ENCODE measurements at regions of chr17 and their contacts with region 1.

Region 1: DNA sequence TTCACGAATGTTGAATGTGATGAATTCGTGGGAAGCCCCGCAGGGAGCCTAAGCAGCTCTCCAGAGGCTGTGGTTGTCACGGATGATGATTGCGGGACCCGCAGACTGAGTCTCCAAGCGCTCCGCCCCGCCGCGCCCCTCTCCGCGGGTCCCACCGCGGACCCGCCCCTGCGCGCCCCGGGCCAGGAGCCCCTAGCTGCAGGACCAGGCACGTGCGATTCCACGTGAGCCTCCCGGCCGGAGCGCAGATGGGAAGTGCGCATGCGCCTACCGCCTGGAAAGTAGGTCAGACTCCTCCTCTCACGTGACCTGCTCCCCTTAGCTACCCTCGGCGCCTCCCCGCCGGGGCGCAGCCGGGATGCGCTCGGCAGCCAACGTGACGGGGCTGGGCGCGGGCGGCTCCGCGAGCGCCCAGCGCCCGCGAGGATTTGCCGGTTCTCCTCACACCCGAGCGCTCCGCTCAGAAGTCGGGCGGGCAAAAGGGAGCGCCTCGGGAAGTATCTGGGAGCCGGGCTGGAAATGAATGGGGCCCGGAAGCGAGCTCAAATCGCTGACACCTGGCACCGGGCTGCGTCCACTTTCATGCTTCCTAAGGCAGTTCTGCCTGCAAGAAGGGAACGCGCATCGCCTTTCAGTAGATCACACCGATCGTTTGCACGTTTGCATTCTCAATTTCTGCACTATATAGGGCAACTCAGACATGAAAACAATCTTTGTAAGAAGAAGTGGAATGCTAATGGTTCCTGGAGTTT is 26.4 kb upstream of the HLF start:
- DNase-seq: peak; percentile 87 to 91 (median 90)
- H3K4me3 ChIP-seq: peak overlapping the region; percentile 20 to 66
- H3K4me3 Mint-ChIP-seq: peak overlapping the region; percentile 89 to 95 (median 92)
- H3K27ac ChIP-seq: peak overlapping the region; percentile 47
- H3K27ac Mint-ChIP-seq: peak overlapping the region; percentile 87 to 94 (median 93)
- H3K4me1 ChIP-seq: peaks cover 28% of the 10 kb centered on the region
- H3K4me1 Mint-ChIP-seq: peaks cover 20 to 31% (median 29%) of the 10 kb centered on the region in 4 donors
- H3K27me3 ChIP-seq: no peaks in the 10 kb centered on the region
- H3K27me3 Mint-ChIP-seq: peaks cover 2 to 7% of the 10 kb centered on the region in 2 donors

Region 2: GRCh38 chr17:54968262-54968987 is 269.9 kb before region 1 on chr17 and contains the starts of genes COX11 and STXBP4:
- CTCF ChIA-PET with region 1: interaction called, 3 read pairs
- POLR2A ChIA-PET with region 1: interaction called, 8 read pairs
- intact Hi-C with region 1: loop called (anchors 1 kb)
- DNase-seq: peak; percentile 94 to 96 (median 95)
- H3K4me3 ChIP-seq: peak within 1 kb of the TSS; percentile 78 to 84
- H3K4me3 Mint-ChIP-seq: no peak within 1 kb of the TSS
- H3K27ac ChIP-seq: peak within 1 kb of the TSS; percentile 90
- H3K27ac Mint-ChIP-seq: no peak within 1 kb of the TSS
- H3K4me1 ChIP-seq: peaks cover 29% of the 10 kb centered on the region
- H3K4me1 Mint-ChIP-seq: peaks cover 8 to 23% (median 18%) of the 10 kb centered on the region in 4 donors
- H3K27me3 ChIP-seq: no peaks in the 10 kb centered on the region
- H3K27me3 Mint-ChIP-seq: no peaks in the 10 kb centered on the region
- total RNA-seq, gene COX11: 84.0 to 86.0 TPM
- total RNA-seq, gene STXBP4: 11.1 to 12.8 TPM

Region 3: GRCh38 chr17:55053855-55054254 is 184.5 kb before region 1 on chr17:
- CTCF ChIA-PET with region 1: interaction called, 13 read pairs
- POLR2A ChIA-PET with region 1: interaction called, 6 read pairs
- intact Hi-C with region 1: no loop called
- DNase-seq: peak in 3 of 5 donors; percentile 12 to 22 (median 18)
- H3K4me3 ChIP-seq: no peak overlapping the region
- H3K4me3 Mint-ChIP-seq: no peak overlapping the region
- H3K27ac ChIP-seq: no peak overlapping the region
- H3K27ac Mint-ChIP-seq: peak overlapping the region in 1 of 7 donors; percentile 29
- H3K4me1 ChIP-seq: no peaks in the 10 kb centered on the region
- H3K4me1 Mint-ChIP-seq: no peaks in the 10 kb centered on the region
- H3K27me3 ChIP-seq: no peaks in the 10 kb centered on the region
- H3K27me3 Mint-ChIP-seq: no peaks in the 10 kb centered on the region

Region 4: GRCh38 chr17:55072898-55073297 is 165.5 kb before region 1 on chr17:
- CTCF ChIA-PET with region 1: interaction called, 3 read pairs
- POLR2A ChIA-PET with region 1: interaction called, 15 read pairs
- intact Hi-C with region 1: loop called (anchors 5 kb)
- DNase-seq: peak; percentile 62 to 79 (median 67)
- H3K4me3 ChIP-seq: no peak overlapping the region
- H3K4me3 Mint-ChIP-seq: peak overlapping the region; percentile 0 to 76 (median 62)
- H3K27ac ChIP-seq: peak overlapping the region; percentile 70
- H3K27ac Mint-ChIP-seq: peak overlapping the region; percentile 88 to 99 (median 97)
- H3K4me1 ChIP-seq: peaks cover 37% of the 10 kb centered on the region
- H3K4me1 Mint-ChIP-seq: peaks cover 17 to 40% (median 26%) of the 10 kb centered on the region in 4 donors
- H3K27me3 ChIP-seq: no peaks in the 10 kb centered on the region
- H3K27me3 Mint-ChIP-seq: no peaks in the 10 kb centered on the region

Region 5: DNA sequence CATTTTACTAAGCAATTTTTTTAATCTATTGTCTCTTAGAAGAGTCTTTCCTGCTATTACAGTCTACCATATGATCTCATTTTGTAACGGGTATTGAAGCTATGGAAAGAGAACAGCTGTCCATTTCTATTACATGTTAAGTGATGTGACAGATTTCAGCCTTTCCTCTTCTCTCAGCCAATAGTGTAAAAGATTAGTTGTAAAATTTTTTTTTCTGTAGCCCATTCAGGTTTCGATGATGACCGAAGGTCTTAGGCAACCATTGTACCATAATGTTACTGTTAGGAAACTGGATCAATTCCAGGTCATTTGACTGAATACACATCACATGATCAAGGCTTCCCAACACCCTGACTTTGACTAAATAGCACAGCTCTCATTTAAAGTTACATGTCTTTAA is 121.2 kb before region 1 on chr17:
- CTCF ChIA-PET with region 1: interaction called, 5 read pairs
- POLR2A ChIA-PET with region 1: interaction called, 15 read pairs
- intact Hi-C with region 1: no loop called
- DNase-seq: no peak
- H3K4me3 ChIP-seq: no peak overlapping the region
- H3K4me3 Mint-ChIP-seq: peak overlapping the region in 1 of 8 donors; percentile 19
- H3K27ac ChIP-seq: no peak overlapping the region
- H3K27ac Mint-ChIP-seq: peak overlapping the region in 4 of 7 donors; percentile 3 to 87 (median 67)
- H3K4me1 ChIP-seq: peaks cover 22% of the 10 kb centered on the region
- H3K4me1 Mint-ChIP-seq: peaks cover 10 to 31% (median 22%) of the 10 kb centered on the region in 4 donors
- H3K27me3 ChIP-seq: no peaks in the 10 kb centered on the region
- H3K27me3 Mint-ChIP-seq: no peaks in the 10 kb centered on the region

Region 6: GRCh38 chr17:55348749-55349354 is 110.5 kb after region 1 on chr17:
- CTCF ChIA-PET with region 1: interaction called, 4 read pairs
- POLR2A ChIA-PET with region 1: interaction called, 5 read pairs
- intact Hi-C with region 1: loop called (anchors 2 kb)
- DNase-seq: peak in 4 of 5 donors; percentile 41 to 48 (median 48)
- H3K4me3 ChIP-seq: no peak overlapping the region
- H3K4me3 Mint-ChIP-seq: peak overlapping the region in 7 of 8 donors; percentile 5 to 76 (median 57)
- H3K27ac ChIP-seq: no peak overlapping the region
- H3K27ac Mint-ChIP-seq: peak overlapping the region in 3 of 7 donors; percentile 5 to 54 (median 51)
- H3K4me1 ChIP-seq: peaks cover 35% of the 10 kb centered on the region
- H3K4me1 Mint-ChIP-seq: peaks cover 30 to 46% (median 30%) of the 10 kb centered on the region in 4 donors
- H3K27me3 ChIP-seq: no peaks in the 10 kb centered on the region
- H3K27me3 Mint-ChIP-seq: no peaks in the 10 kb centered on the region

Measured in CD4-positive, alpha-beta memory T cell (primary cell).